Activated CD4-positive, alpha-beta memory T cell treated with anti-CD3 and anti-CD28 coated beads, Interleukin-2, amount 10 ng/mL, durations not matched to agents 7 days and 5 days (primary cell): ENCODE measurements at regions of chr7 and their contacts with region 1.

Region 1: DNA sequence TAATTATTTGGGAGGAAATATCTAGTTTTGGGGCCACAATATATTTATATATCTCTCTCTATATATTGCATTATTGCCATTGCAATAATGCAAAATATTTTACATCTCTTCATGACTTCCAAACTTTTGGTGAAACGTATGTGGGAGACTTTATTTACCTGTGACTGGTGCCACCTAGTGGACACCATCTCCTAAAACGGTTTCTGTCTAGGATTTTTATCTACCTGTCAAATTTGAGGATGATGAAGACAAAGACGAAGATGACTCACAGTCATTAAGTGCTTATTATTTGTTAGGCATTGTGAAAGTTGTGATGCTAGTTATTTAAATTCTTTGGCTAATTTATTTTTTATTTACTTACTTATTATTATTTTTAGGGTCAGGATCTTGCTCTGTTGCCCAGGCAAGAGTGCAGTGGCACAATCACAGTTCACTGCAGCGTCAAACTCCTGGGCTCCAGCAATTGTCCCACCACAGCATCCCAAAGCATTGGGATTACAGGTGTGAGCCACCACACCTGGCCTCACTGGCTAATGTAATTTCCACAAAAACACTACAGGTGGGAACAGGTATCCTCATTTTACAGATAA is 18.7 kb upstream of the CBLL1 start:
- DNase-seq: peak; percentile 53
- H3K4me3 Mint-ChIP-seq: no peak overlapping the region
- H3K27ac Mint-ChIP-seq: no peak overlapping the region
- H3K4me1 Mint-ChIP-seq: no peaks in the 10 kb centered on the region
- H3K27me3 Mint-ChIP-seq: peaks cover 16% of the 10 kb centered on the region

Region 2: DNA sequence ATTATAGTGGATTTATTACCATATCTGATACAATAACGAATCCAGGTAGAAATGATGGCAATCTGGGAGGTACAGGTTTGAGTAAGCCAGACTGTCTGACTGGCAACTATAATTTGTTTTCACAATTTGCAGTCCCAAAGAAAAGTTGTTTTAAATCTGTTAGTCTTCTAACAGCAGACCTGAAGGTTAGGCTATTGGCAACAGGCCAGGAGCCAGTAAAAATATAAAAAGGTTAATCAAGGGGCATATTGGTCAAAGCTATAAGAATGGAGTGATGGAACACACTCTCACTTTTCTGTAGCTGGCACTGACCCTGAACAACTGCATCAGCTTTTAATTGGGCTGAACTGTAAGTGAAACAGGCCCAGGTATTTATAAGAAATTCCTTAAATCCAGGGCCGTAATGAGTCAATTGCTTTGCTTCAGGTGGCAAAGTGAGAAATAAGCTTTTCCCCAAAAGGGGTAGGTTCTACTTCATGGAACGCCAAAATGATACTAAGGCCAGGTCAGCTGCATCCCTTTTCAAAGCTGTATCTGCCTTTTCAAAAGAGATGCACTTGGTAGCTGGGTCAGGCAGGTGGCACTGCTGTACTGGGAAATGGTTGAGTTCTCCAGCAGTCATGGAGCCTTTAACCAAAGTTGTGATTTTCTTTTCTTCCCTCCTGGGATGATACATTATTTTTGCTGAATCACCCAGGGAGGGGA is 262.4 kb before region 1 on chr7:
- CTCF ChIA-PET with region 1: interaction called, 19 read pairs
- POLR2A ChIA-PET with region 1: no interaction called
- DNase-seq: peak; percentile 56
- H3K4me3 Mint-ChIP-seq: no peak overlapping the region
- H3K27ac Mint-ChIP-seq: no peak overlapping the region
- H3K4me1 Mint-ChIP-seq: no peaks in the 10 kb centered on the region
- H3K27me3 Mint-ChIP-seq: no peaks in the 10 kb centered on the region